ENCODE measurements at regions of chr1 and their contacts with region 1.

Region 1: GRCh38 chr1:43171876-43172526 is at the starts of genes CFAP57 and EBNA1BP2:
- DNase-seq: peak; percentile 93 to 95 (median 94)
- H3K4me3 ChIP-seq: peak within 1 kb of the TSS; percentile 81 to 87
- H3K4me3 Mint-ChIP-seq: peak within 1 kb of the TSS; percentile 94 to 100 (median 99)
- H3K27ac ChIP-seq: peak within 1 kb of the TSS; percentile 62
- H3K27ac Mint-ChIP-seq: peak within 1 kb of the TSS; percentile 84 to 99 (median 96)
- H3K4me1 ChIP-seq: peaks cover 21% of the 10 kb centered on the region
- H3K4me1 Mint-ChIP-seq: peaks cover 22 to 31% (median 26%) of the 10 kb centered on the region in 4 donors
- H3K27me3 ChIP-seq: peaks cover 10% of the 10 kb centered on the region
- H3K27me3 Mint-ChIP-seq: peaks cover 13 to 15% of the 10 kb centered on the region in 2 donors
- total RNA-seq, gene CFAP57: not detected
- total RNA-seq, gene EBNA1BP2: 23.6 to 27.6 TPM

Region 2: DNA sequence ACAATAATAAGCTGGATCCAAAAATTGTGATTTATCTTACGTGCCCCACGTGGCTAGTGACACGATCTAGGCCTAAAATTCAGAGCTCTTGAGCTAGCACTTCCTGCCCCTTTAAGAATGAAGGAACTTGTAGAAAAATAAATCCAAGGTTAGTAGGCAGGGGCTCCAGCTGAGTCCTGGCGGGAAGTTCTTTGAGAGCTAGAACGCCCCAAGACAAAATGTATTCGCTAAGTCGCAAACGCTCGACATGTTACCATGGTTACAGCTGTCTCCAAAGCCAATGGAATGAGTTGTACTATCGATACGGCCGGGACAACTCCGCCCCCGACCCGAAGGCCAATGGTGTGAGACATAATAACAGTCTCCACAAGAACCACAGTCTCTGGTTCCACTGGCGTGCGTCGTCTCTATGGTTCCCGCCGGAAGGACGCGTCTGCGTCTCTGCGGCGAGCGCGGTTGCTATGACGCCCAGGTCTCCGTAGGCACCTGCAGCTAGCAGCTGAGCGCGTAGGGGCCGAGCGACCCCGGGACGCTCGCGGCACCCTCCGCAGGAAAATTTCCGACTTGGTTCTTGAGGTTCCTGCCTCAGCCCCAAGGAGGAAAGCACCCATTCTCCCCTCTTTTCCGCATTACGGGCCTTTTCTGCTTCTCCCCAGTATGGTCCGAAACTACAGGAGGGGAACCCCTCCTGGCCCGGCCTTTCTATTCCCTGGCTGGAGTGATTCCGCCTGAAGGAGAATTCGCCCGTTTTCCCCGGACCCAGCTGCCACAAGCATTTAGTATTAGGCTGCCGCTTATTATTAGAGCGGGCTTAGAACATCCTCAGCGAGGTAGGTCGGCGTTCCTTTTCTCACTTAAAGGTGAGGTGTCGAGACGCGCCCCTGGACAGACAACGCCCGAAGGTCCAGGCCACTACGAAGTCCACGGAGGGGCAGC is 708.9 kb before region 1 on chr1 and contains the start of gene CCDC30:
- CTCF ChIA-PET with region 1: no interaction called
- POLR2A ChIA-PET with region 1: no interaction called
- intact Hi-C with region 1: loop called (anchors 1 kb)
- DNase-seq: peak; percentile 97 to 99 (median 98)
- H3K4me3 ChIP-seq: peak within 1 kb of the TSS; percentile 44
- H3K4me3 Mint-ChIP-seq: peak within 1 kb of the TSS; percentile 84 to 94 (median 86)
- H3K27ac ChIP-seq: peak within 1 kb of the TSS; percentile 74
- H3K27ac Mint-ChIP-seq: peak within 1 kb of the TSS; percentile 93 to 98 (median 97)
- H3K4me1 ChIP-seq: peaks cover 24% of the 10 kb centered on the region
- H3K4me1 Mint-ChIP-seq: peaks cover 17 to 44% (median 27%) of the 10 kb centered on the region in 4 donors
- H3K27me3 ChIP-seq: no peaks in the 10 kb centered on the region
- H3K27me3 Mint-ChIP-seq: no peaks in the 10 kb centered on the region
- total RNA-seq, gene CCDC30: 7.0 to 7.1 TPM

Region 3: DNA sequence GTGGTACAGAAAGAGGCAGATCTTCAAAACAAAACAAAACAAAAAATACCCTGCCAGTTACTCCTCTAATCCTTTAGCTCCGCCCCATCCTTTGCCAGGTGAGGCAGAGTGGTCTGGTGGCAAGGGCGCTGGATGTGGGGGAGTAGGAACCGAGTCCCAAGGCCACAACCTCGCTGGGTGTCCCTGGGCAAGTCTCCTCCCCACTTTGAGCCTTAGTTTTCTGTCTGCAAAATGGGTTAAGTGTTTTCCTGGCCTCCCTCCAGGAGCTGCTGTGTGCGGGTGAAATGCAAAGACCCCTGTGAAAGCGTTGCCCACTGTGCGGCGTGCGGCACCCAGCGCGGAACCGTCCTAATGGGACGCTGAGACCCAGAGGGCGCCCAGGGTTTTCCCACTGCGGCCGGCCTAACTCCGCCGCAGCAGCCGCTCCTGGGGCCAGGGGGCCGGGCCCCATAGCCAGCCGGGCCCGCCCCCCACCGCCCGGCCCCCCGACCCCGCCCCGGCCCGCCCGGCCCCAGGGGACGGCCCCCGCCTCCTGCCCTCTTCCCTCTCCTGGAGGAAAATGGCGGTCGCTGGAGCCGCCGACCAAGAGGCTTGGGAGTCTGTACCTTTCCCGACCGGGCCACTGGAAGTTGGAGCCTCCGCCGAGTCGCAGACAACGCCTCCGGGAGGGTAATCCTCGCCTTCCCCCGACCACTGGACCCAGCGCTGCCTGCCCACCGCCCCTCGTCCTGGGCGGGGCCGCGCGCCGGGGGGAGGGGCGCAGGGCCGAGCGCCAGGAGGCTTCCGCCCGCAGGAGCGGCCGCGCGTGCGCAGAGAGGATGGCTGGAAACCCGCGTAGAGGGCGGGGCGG is 355.2 kb before region 1 on chr1 and contains the starts of genes ERMAP and SVBP:
- CTCF ChIA-PET with region 1: no interaction called
- POLR2A ChIA-PET with region 1: interaction called, 3 read pairs
- intact Hi-C with region 1: loop called (anchors 10 kb)
- DNase-seq: peak; percentile 88 to 97 (median 92)
- H3K4me3 ChIP-seq: peak within 1 kb of the TSS; percentile 43 to 74
- H3K4me3 Mint-ChIP-seq: peak within 1 kb of the TSS; percentile 82 to 93 (median 86)
- H3K27ac ChIP-seq: peak within 1 kb of the TSS; percentile 87
- H3K27ac Mint-ChIP-seq: peak within 1 kb of the TSS; percentile 86 to 96 (median 94)
- H3K4me1 ChIP-seq: peaks cover 17% of the 10 kb centered on the region
- H3K4me1 Mint-ChIP-seq: peaks cover 19 to 32% (median 27%) of the 10 kb centered on the region in 4 donors
- H3K27me3 ChIP-seq: no peaks in the 10 kb centered on the region
- H3K27me3 Mint-ChIP-seq: no peaks in the 10 kb centered on the region
- total RNA-seq, gene ERMAP: 6.5 to 8.6 TPM
- total RNA-seq, gene SVBP: 20.4 to 23.5 TPM

Region 4: DNA sequence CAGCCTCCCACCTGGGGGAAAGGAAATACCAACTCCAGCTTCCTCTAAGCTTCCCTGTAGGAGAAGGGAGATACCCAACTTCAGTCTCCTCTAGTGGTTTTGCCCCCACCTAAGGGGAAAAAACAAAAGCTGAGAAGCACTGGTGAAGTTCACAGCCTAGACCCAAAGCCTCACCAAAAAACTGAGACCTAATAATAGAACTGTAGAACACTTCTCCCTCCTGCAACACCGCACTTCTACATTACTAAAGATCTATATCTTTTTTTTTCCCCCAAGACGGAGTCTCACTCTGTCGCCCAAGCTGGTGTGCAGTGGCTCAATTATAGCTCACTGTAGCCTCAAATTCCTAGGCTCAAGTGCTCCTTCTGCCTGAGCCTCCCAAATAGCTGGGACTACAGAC is 256.5 kb before region 1 on chr1:
- CTCF ChIA-PET with region 1: no interaction called
- POLR2A ChIA-PET with region 1: no interaction called
- intact Hi-C with region 1: no loop called
- DNase-seq: no peak
- H3K4me3 ChIP-seq: no peak overlapping the region
- H3K4me3 Mint-ChIP-seq: no peak overlapping the region
- H3K27ac ChIP-seq: no peak overlapping the region
- H3K27ac Mint-ChIP-seq: no peak overlapping the region
- H3K4me1 ChIP-seq: no peaks in the 10 kb centered on the region
- H3K4me1 Mint-ChIP-seq: peaks cover 0 to 5% (median 2%) of the 10 kb centered on the region in 4 donors
- H3K27me3 ChIP-seq: no peaks in the 10 kb centered on the region
- H3K27me3 Mint-ChIP-seq: peaks cover 2 to 4% of the 10 kb centered on the region in 2 donors

Region 5: DNA sequence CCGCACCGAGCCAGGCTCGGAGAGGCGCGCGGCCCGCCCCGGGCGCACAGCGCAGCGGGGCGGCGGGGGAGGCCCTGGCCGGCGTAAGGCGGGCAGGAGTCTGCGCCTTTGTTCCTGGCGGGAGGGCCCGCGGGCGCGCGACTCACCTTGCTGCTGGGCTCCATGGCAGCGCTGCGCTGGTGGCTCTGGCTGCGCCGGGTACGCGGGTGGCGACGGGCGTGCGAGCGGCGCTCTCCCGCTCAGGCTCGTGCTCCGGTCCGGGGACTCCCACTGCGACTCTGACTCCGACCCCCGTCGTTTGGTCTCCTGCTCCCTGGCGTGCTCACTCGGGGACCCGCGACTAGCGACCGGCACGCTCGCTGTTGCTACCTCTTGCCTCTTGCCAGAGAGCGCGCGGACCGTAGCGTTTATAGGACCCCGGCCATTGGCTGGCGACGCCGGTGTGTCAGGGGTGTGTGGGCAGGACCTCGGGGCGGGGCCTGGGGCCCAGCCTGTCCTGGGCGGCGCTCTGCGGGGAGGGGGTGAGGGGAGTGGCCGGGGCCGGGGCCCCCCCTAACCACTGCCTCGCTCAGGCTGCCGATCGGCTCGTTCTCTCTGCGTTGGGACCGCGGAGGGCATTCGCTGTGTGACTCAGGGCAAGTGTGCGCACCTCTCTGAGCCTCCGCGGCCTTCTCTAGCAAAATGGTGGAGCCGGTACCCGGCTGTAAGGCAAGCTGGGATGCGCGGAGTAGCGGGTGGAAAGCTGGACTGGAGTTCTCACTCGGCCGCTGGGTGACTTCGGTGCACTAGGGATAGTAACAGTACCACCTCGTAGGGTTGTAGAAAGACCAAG is 213.3 kb before region 1 on chr1 and contains the start of gene SLC2A1:
- CTCF ChIA-PET with region 1: no interaction called
- POLR2A ChIA-PET with region 1: interaction called, 3 read pairs
- intact Hi-C with region 1: loop called (anchors 1 kb)
- DNase-seq: peak; percentile 92 to 97 (median 95)
- H3K4me3 ChIP-seq: peak within 1 kb of the TSS; percentile 66 to 78
- H3K4me3 Mint-ChIP-seq: peak within 1 kb of the TSS; percentile 97 to 99 (median 98)
- H3K27ac ChIP-seq: peak within 1 kb of the TSS; percentile 76
- H3K27ac Mint-ChIP-seq: peak within 1 kb of the TSS; percentile 97 to 99 (median 98)
- H3K4me1 ChIP-seq: peaks cover 59% of the 10 kb centered on the region
- H3K4me1 Mint-ChIP-seq: peaks cover 35 to 79% (median 51%) of the 10 kb centered on the region in 4 donors
- H3K27me3 ChIP-seq: no peaks in the 10 kb centered on the region
- H3K27me3 Mint-ChIP-seq: no peaks in the 10 kb centered on the region
- total RNA-seq, gene SLC2A1: 57.5 to 58.4 TPM

Region 6: GRCh38 chr1:43389326-43390313 is 217.6 kb after region 1 on chr1 and contains the starts of genes MED8 and SZT2:
- CTCF ChIA-PET with region 1: no interaction called
- POLR2A ChIA-PET with region 1: interaction called, 7 read pairs
- intact Hi-C with region 1: loop called (anchors 1 kb)
- DNase-seq: peak; percentile 88 to 93 (median 91)
- H3K4me3 ChIP-seq: peak within 1 kb of the TSS; percentile 87 to 88
- H3K4me3 Mint-ChIP-seq: peak within 1 kb of the TSS; percentile 99 to 100 (median 100)
- H3K27ac ChIP-seq: peak within 1 kb of the TSS; percentile 82
- H3K27ac Mint-ChIP-seq: peak within 1 kb of the TSS; percentile 89 to 100 (median 99)
- H3K4me1 ChIP-seq: peaks cover 28% of the 10 kb centered on the region
- H3K4me1 Mint-ChIP-seq: peaks cover 32 to 60% (median 45%) of the 10 kb centered on the region in 4 donors
- H3K27me3 ChIP-seq: no peaks in the 10 kb centered on the region
- H3K27me3 Mint-ChIP-seq: no peaks in the 10 kb centered on the region
- total RNA-seq, gene MED8: 34.0 to 35.6 TPM
- total RNA-seq, gene SZT2: 135 to 153 TPM

Region 7: DNA sequence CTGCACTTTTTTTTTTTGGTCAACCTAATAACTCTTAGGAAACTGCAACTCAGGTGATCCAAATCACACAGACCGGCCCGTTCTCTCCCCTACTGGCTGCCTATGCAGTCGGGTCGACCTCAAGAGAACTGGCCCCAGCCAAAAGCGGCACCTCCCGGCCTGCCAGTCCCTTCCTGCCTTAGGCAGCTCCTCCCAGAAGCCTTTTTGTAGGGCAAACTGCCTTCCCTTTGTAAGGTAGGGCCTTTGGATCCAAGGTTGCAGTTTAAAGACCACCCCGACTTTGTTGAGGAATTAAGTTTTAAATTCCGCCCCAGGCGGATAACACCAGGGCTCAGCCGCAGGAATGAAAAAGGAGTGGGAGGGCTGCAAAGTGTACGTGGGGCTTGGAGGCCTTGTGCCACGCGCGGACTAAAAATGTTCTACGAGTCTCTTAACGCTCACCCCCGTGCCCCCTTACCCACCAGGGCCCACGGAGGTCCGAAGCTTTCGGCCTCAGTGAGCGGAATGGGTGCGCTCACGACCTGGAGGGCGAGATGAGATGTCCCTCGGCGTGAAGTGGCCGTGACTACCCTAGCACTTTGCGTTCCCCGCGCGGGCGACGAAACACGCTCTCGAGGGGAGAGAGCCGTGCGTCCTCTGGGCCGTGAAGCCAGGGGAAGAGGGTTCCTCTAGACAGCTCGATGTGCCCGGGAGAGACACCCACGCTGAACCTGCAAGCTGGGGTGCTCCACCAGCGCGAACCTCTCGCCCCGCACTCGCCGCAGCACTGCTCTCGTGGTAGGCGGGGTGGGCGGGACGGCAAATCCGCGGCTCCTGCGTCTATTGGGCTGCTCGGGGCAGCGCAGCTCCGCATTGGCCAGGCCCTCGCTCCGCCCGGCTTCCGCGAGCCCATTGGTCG is 534.8 kb after region 1 on chr1:
- CTCF ChIA-PET with region 1: no interaction called
- POLR2A ChIA-PET with region 1: no interaction called
- intact Hi-C with region 1: loop called (anchors 1 kb)
- DNase-seq: peak; percentile 87 to 91 (median 89)
- H3K4me3 ChIP-seq: peak overlapping the region; percentile 24 to 79
- H3K4me3 Mint-ChIP-seq: peak overlapping the region; percentile 85 to 94 (median 90)
- H3K27ac ChIP-seq: peak overlapping the region; percentile 55
- H3K27ac Mint-ChIP-seq: peak overlapping the region; percentile 38 to 79 (median 77)
- H3K4me1 ChIP-seq: peaks cover 16% of the 10 kb centered on the region
- H3K4me1 Mint-ChIP-seq: peaks cover 13 to 32% (median 24%) of the 10 kb centered on the region in 4 donors
- H3K27me3 ChIP-seq: no peaks in the 10 kb centered on the region
- H3K27me3 Mint-ChIP-seq: no peaks in the 10 kb centered on the region

Measured in CD4-positive, alpha-beta memory T cell (primary cell).